ENCODE measurements at regions of chr13 and their contacts with region 1.

Region 1: DNA sequence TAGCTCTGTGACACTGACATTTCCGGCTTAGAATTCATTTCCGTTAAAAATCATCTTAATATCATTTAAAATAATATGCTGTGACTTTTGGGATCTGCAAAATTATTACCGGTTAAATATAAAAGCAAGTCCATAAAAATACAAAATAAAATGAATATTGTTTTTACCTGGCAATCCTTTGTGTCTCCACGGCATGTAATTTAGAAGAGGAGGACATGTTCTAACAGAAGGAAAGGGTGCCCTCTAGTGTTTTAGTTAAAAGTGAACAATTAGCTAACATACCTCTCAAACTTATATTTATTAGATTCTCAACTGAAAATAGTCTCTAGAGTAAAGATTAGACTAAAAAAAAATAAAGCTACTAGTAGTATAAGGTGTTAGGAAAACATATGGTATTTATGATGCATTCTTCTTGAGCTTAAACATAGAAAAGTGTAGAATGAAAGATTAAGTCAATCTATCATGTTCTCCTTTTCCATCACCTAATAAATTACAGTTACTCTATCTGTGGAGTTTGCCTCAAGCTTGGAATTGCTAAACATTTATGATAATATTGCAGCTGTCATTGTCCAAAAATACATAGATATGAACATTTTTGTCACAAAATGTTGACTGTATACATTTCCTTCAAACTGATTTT is 676.7 kb upstream of the SPRY2 start:
- DNase-seq: no peak
- H3K4me3 Mint-ChIP-seq: no peak overlapping the region
- H3K27ac Mint-ChIP-seq: no peak overlapping the region
- H3K4me1 Mint-ChIP-seq: no peaks in the 10 kb centered on the region
- H3K27me3 Mint-ChIP-seq: no peaks in the 10 kb centered on the region

Region 2: DNA sequence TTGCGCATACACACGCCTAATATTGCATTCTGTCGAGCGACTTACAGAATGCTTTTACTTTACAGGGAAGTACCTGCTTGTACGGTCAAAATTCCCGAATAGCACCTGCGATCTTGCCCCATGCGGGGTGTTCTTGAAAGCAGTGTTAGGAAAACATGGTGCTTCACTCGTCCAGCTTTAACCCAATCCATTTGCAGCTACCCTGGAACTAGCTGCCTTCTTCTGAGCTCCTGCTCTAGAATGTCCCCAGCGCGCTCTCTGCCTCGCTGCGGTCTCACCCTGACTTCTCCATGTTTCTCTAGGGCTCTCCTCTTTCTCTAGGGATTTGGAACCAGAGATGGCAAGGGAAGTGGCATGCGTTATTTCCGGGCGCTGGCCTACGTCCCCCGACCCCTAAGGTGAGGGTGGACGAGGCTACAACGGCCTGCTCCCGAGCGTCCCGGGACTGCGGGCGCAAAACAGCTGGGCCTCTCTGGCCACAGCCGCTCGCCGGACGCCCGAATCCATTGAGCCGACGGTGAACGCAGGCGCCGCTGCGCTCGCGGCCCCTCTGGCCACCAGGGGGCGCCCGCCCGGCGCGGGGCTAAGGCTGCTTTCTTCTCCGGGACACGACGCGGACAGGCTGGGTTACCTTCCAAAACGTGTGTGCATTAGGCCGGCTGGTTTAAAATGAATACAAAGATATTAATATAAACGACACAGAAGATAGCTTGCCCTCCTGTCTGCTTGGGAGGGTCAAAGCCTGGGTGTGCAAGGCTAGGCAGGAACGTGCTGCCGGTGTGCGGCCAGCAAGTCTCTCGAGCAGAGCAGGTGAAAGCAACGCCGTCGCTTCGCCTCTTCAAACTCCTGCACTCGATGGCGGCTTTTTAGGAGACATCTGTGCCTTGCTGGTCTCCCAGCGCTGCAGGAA is 674.9 kb before region 1 on chr13:
- intact Hi-C with region 1: loop called (anchors 2 kb)
- DNase-seq: peak; percentile 56
- H3K4me3 Mint-ChIP-seq: peak overlapping the region; percentile 17
- H3K27ac Mint-ChIP-seq: no peak overlapping the region
- H3K4me1 Mint-ChIP-seq: peaks cover 18% of the 10 kb centered on the region
- H3K27me3 Mint-ChIP-seq: peaks cover 45% of the 10 kb centered on the region

Region 3: GRCh38 chr13:80979035-80979641 is 38.5 kb before region 1 on chr13:
- intact Hi-C with region 1: loop called (anchors 1 kb)
- DNase-seq: no peak
- H3K4me3 Mint-ChIP-seq: no peak overlapping the region
- H3K27ac Mint-ChIP-seq: no peak overlapping the region
- H3K4me1 Mint-ChIP-seq: no peaks in the 10 kb centered on the region
- H3K27me3 Mint-ChIP-seq: no peaks in the 10 kb centered on the region

Measured in activated T-helper 1 cell treated with anti-CD3 and anti-CD28 coated beads, Interleukin-12 subunit alpha, Interleukin-12 subunit beta, Interleukin-2, Interleukin-4 antibody, amounts not matched to agents 30 ng/mL and 10 ng/mL and 1 ng/mL, durations not matched to agents 14 hours and 24 hours and 36 hours (primary cell).